Right ventricle myocardium inferior (tissue), 1 donor: ENCODE measurements at regions of chr1 and their contacts with region 1.

Region 1: DNA sequence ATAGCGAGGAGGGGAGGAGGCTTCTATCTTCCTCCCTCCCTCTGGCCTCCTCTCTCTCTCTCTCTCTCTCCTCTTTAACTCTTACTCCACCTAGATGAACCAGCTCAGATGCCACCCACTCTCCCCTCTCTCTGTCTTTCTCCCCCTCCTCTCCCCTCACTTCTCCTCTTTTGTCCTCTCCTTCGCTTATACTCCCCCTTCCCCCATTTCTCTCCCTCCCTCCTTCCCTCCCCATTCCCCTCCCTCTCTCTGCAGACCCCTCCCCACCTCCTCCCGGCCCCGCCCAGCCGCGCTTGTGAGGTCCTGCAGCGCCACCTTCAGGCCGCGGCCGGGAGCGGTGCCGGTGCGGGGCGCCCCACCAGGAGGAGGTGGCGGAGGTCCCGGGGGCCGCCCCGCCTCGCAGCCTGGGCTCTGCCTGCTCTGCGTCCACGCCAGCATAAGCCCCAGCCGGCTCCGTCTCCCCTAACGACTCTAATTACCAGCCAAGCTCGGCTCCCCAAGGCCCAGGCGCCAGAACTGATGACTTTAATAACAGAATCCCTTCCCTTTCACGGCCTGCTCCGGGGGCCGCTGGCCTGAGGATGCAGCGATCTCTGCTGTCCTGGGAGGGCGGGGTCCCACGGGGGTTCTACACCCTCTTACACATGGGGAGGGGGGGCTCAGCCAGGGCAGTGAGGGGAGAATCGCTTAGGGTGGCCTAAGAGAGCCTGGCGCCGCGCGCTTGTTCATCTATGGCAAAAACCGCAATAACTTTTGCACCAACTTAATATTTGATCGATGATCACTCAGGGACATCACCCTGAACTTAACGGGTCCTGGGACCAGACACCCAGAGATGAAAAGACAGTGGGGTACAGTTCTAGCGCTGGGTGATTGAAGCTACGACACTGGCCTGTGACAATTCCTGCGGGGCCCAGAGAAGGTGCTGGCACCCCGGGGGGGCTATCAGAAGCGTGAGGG is 637.3 kb downstream of the MATN1 start:
- DNase-seq: peak; percentile 74
- ATAC-seq: no peak

Region 2: DNA sequence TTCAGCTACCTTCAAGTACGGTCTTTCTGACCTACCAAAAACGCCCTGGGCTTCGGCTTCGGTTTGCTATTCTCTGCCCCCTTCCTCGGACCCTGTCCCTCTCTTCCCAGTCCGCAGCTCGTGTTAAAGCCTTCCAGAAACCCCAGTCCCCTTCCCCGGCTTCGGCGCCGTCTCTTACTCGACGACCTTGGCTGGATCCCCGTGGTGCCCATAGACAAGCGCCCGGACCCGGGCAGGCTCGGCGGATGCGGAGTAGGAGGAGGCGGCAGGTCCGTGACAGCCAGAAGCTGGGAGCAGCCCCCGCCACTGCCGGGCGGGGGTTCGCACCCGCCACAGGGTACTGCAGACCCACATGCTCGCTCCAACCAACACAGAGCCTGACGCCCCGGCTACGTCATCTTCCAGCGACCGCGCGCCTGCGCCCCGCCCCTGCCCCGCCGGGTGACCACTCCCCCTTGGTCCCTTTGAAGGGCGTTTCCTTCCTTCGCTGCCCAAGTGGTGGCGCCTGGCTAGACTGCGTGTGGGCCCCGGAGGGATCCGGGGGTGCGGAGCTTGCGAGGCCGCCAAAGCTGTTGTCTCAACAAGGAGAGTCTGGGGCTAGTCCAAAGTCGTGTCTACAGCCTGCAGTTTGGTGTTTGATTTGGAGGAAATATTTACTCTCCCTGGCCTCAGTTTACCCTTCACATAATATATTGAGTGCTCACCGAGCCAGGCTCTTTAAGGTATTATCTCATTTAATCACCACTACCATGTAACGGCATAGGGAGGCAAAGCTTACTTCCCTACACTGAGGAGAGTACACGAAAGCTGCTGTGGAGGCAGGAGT is 855.3 kb before region 1 on chr1 and contains the start of gene MECR:
- intact Hi-C with region 1: loop called (anchors 10 kb)
- DNase-seq: peak; percentile 97
- ATAC-seq: peak; percentile 98
- total RNA-seq, gene MECR: 35.4 TPM

Region 3: DNA sequence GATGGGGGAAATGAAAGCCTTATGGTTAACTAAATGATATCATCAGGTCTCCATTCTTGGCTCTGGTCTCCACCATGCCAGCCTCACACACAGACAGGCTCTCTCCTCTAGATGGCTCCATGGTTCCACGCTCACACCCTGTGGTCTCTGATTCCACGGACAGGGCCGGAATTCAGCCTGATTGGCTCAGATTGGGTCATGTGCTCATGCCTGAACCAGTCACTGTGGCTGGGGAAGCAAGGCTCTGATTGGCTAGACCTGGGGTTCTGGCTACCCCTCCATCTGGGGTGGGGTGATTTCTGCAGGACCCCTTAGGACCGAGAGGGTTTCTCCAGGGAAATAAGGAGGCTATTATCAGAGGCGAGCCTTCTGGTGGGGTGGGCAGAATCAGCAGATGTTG is 572.7 kb before region 1 on chr1:
- intact Hi-C with region 1: loop called (anchors 5 kb)
- DNase-seq: no peak
- ATAC-seq: peak; percentile 76

Region 4: GRCh38 chr1:29793101-29793546 is 293.0 kb before region 1 on chr1:
- intact Hi-C with region 1: loop called (anchors 5 kb)
- DNase-seq: no peak
- ATAC-seq: peak; percentile 62

Region 5: GRCh38 chr1:30024411-30025195 is 61.5 kb before region 1 on chr1:
- intact Hi-C with region 1: no loop called
- DNase-seq: no peak
- ATAC-seq: no peak